Thyroid gland (tissue), 4 donors: ENCODE measurements at regions of chr5 and their contacts with region 1.

Region 1: DNA sequence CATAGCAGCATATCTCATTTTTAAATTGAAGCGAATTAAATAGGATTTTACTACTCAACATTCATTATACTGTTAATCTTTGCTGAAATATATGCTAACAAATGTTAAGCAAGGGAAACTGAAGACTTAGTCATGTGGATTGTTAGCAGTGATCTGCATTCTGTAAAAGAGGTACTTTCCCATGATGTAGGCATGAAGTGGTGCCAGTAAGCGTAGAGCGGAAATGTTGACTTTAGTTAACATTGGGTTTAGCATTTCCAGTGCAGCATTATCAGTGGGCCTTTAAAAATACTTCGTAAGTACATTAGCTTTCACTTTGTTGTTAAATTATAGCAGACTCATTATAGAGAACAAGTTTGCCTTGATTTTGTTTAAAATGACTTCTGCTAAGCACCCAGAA is 130.3 kb downstream of the CDC42SE2 start:
- DNase-seq: peak; percentile 35 to 38
- H3K4me3 ChIP-seq: no peak overlapping the region
- H3K27ac ChIP-seq: peak overlapping the region; percentile 81 to 96 (median 90)
- H3K4me1 ChIP-seq: peaks cover 25 to 27% of the 10 kb centered on the region in 2 donors
- H3K27me3 ChIP-seq: no peaks in the 10 kb centered on the region
- CTCF ChIP-seq: no peak
- POLR2A ChIP-seq: no peak

Region 2: DNA sequence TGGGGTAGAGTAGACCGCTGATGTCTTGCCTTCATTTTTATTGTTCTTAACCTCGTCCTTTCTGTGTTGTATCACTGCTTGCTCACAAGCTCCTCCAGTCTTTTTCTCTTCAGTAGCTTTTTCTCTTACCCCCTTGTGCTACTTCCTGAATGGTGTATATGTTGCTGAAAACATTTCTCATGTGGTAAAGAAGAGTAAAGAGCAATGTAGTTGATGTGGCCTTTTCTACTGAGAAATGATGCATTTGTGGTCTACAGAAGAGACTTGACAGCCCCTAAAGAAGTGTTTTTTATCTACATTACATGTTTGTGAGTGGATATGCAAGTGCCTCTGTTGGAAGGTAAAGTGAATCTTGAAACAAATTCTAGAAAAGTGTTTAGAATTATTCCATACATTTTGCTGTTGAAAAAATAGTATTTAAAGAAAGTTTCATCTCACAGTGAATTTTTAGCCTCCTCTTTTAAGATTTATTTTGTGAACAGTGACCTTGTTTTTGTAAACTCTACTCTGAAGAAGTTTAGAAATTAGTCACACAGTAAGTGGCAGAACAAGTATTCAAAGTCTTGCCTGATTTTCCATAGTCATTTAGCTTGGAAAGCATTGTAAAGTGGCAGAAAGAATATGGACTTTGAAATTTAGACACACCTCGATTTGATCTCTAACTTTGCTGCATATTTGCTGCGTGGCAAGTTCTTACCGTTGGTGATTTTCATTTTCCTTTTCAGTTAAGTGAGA is 112.8 kb before region 1 on chr5:
- intact Hi-C with region 1: loop called (anchors 10 kb)
- DNase-seq: no peak
- H3K4me3 ChIP-seq: no peak overlapping the region
- H3K27ac ChIP-seq: peak overlapping the region; percentile 65 to 79 (median 70)
- H3K4me1 ChIP-seq: peaks cover 34% of the 10 kb centered on the region in 2 donors
- H3K27me3 ChIP-seq: no peaks in the 10 kb centered on the region
- CTCF ChIP-seq: no peak
- POLR2A ChIP-seq: no peak

Region 3: DNA sequence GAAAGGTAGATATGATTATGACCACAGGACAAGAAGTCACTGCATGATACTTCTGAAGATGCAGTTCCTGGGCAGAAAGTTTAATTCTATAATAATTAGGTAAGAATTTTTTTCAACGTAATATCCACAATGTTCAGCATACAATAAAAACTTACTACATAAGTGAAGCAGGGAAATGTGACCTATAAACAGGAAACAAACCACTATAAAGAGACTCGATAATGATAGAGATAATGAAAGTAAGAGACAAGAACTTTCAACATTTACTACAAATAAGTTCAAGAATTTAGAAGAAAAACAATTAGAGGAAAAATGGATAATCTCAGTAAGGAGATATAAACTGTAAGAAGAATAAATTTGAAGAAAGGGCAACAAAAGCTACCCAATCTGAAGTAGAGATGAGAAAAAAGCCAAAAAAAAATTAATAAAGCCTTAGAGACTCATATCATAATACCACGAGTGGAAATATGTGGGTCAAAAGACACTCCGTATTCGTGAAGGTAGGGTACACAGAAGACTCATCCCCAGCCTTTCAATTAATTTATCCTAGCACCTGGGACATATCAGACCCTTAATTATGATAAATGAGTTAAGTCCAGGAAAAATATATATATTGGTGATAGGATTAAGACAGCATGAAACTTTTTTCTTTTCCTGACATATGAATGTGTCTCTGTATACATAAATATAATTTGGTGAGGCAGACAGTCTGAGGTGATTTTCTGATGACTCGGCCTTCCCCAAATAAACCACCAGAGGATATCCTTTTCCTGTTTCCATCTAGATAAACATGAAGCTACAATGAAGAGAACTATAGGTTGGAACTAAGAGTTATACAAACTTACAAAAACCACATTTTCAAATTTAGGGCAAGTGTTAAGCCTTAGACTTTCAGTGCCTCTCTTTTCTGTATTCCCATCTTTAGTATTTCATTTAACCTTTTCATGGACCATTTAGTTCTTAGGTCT is 120.5 kb after region 1 on chr5:
- intact Hi-C with region 1: no loop called
- DNase-seq: no peak
- H3K4me3 ChIP-seq: no peak overlapping the region
- H3K27ac ChIP-seq: peak overlapping the region in 2 of 3 donors; percentile 39 to 48
- H3K4me1 ChIP-seq: no peaks in the 10 kb centered on the region
- H3K27me3 ChIP-seq: no peaks in the 10 kb centered on the region
- CTCF ChIP-seq: no peak
- POLR2A ChIP-seq: no peak

Region 4: DNA sequence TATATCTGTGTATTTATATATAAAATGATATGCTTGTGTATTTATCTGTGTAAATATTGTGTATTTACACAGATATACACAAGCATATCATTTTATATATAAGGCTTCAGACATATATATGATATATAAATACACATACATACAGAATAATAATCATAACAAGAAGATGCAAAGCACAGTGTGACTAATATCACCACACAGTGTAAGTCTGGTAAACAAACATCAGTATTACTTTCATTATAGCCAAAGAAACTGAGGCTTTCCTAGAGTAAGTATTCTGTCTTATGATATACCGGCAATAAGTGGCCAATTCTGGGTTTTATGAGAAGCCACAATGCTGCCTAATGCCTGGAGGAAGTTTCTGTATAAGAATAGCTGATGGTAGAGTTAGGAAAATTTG is 270.8 kb after region 1 on chr5:
- intact Hi-C with region 1: no loop called
- DNase-seq: no peak
- H3K4me3 ChIP-seq: no peak overlapping the region
- H3K27ac ChIP-seq: no peak overlapping the region
- H3K4me1 ChIP-seq: no peaks in the 10 kb centered on the region
- H3K27me3 ChIP-seq: no peaks in the 10 kb centered on the region
- CTCF ChIP-seq: no peak
- POLR2A ChIP-seq: no peak